Activated naive CD8-positive, alpha-beta T cell treated with anti-CD3 and anti-CD28 coated beads, Interleukin-2, amount 10 ng/mL, durations not matched to agents 7 days and 5 days (primary cell): ENCODE measurements at regions of chr1 and their contacts with region 1.

Region 1: DNA sequence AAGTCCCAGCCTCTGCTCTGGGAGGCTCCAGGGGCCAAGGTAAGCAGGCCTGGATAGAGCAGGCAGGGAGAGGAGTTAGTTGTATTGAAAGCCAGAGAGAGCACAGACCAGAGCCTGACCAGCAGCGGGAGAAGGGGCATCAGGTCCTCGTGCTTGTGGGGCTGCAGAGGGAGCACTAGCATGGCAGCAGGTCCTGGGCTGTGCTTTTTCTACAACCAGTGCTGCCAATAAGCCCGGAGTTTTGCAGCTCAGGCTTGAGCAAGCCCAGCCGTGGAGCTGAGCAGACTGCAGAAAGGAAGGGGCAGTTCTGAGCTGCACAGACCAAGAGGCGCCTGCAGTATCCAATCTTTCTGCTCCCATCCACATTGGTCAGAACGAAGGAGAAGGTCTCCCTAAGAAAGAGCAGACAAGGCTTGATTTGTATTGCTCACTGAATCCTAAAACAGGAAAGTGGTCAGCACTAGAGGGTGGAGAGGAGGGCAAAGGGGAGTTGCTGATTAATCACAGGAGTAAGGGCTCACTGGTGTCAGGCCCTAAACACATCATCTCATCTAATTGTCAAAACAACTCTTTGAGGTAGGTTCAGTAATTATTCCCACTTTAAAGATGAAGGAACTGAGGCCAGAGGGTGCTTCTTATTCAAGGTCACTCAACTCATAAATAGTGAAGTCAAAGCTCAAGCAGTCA is 2.7 kb downstream of the DENND2D start:
- DNase-seq: peak; percentile 65
- ATAC-seq: peak; percentile 35
- H3K4me3 Mint-ChIP-seq: peak overlapping the region; percentile 98
- H3K27ac Mint-ChIP-seq: peak overlapping the region; percentile 97
- H3K4me1 Mint-ChIP-seq: peaks cover 53% of the 10 kb centered on the region
- H3K27me3 Mint-ChIP-seq: no peaks in the 10 kb centered on the region

Region 2: GRCh38 chr1:111139956-111140679 is 57.6 kb before region 1 on chr1 and contains the starts of genes CEPT1 and DRAM2:
- POLR2A ChIA-PET with region 1: interaction called, 22 read pairs
- DNase-seq: peak; percentile 90
- ATAC-seq: peak; percentile 73
- H3K4me3 Mint-ChIP-seq: peak within 1 kb of the TSS; percentile 100
- H3K27ac Mint-ChIP-seq: peak within 1 kb of the TSS; percentile 99
- H3K4me1 Mint-ChIP-seq: peaks cover 35% of the 10 kb centered on the region
- H3K27me3 Mint-ChIP-seq: no peaks in the 10 kb centered on the region
- total RNA-seq, gene CEPT1: 44.1 to 46.5 TPM
- total RNA-seq, gene DRAM2: 36.7 to 37.1 TPM

Region 3: DNA sequence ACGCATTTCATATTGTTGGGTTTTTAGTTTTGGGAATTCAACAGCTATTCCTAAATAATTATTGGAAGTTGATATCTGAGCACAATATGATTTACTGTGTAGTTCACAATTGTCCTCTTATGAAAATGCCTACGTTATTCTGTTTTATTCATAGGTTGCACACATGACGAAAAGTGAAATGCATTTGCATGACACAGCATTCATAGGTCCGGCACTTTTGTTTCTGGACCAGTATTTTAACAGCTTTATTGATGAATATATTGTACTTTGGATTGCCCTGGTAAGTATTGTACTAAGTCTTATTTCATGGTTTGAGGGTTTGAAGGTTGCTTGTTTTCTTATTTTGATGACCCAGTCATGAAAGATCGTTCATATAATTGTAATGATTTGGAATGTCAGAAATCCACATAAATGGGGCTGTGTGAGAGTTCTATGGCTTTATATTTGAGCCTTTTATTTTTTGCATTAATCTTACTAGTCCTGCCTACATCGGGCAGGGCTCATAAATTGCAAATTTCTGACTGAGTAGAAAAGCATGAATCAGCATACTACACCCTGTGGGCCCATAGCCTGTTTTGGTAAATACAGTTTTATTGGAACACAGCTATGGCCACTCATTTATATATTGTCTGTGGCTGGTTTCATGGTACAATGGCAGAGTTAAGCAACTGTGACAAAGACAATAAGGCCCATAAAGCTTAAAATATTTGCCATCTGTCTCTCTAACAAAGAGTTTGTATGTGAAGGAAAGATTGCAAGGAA is 14.3 kb before region 1 on chr1:
- POLR2A ChIA-PET with region 1: interaction called, 41 read pairs
- DNase-seq: no peak
- ATAC-seq: no peak
- H3K4me3 Mint-ChIP-seq: no peak overlapping the region
- H3K27ac Mint-ChIP-seq: no peak overlapping the region
- H3K4me1 Mint-ChIP-seq: peaks cover 28% of the 10 kb centered on the region
- H3K27me3 Mint-ChIP-seq: no peaks in the 10 kb centered on the region

Region 4: DNA sequence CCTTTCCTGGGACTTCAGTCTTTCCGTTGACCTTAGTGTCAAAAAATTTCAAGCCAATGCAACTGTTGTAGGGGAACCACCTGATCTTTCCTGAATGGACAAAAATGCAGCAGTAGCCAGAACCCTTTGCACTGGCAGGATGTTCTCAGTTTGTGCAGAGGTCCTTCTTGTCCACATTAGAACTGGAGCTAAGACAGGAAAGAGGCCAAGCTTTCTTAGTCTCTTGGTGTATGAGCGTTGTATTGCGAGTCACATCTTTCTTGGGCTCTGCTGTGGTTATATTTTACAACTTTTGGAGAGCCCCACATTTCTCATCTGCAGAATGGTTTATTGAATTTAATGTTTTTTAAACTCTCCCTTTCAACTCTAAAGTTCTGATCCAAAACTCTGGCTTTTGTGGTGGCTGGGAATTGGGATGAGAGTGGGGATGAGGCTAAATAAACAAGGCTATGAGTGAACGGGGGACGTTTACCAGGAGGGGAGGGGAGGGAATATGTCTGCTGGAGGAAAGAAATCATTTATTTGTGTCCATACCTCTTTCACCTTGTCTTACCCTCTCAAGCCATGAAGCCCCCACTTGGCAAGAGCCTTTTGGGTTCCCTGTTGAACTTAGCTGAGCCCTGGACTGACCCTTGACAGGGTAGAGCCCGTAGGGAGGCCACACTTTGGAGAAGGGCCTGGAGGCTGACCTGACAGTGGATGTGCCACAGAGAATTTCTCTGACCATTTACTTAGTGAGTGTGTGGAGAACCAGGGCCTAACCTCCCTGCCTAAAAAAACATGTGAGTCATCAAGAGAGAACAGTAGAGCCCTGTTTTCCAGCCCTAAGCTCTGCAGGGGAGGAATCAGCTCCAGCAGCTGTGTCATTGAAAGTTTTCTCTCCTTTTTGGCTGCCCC is 30.4 kb after region 1 on chr1:
- POLR2A ChIA-PET with region 1: interaction called, 948 read pairs
- DNase-seq: no peak
- ATAC-seq: peak; percentile 24
- H3K4me3 Mint-ChIP-seq: peak overlapping the region; percentile 37
- H3K27ac Mint-ChIP-seq: peak overlapping the region; percentile 69
- H3K4me1 Mint-ChIP-seq: peaks cover 62% of the 10 kb centered on the region
- H3K27me3 Mint-ChIP-seq: no peaks in the 10 kb centered on the region

Region 5: DNA sequence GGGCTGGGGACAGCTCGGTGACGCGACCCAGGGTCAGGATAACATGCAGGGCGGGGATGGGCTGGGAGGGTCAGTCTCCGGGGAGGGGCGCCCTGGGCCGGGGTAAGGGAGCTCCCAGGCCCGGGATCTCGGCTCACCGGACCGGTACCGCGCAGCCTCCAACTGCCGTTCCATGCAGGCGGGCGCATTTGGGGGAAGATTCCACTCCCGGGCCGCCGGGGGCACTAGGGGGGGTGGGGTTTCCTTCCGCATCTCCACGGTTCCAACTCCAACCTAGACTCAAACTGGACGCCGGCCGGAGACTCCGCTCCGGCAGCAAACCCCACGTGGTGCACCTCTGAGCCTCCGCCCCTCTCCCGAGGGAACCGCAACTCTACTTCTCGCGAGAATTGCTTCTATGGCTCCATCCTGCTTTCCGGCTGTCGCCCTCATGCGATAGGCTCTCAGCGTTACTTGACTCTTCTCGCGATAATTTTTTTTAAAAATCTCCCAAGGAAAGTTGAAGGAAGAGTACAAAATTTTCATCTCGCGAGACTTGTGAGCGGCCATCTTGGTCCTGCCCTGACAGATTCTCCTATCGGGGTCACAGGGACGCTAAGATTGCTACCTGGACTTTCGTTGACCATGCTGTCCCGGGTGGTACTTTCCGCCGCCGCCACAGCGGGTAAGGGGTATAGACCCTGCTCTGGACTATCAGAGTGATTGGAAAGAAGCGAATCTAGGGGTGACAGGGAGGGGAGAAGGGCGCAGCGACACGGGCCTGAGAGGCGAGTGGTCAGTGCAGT is 251.4 kb after region 1 on chr1 and contains the starts of genes ATP5PB and WDR77:
- POLR2A ChIA-PET with region 1: interaction called, 14 read pairs
- DNase-seq: peak; percentile 83
- ATAC-seq: peak; percentile 94
- H3K4me3 Mint-ChIP-seq: peak within 1 kb of the TSS; percentile 99
- H3K27ac Mint-ChIP-seq: peak within 1 kb of the TSS; percentile 94
- H3K4me1 Mint-ChIP-seq: peaks cover 61% of the 10 kb centered on the region
- H3K27me3 Mint-ChIP-seq: no peaks in the 10 kb centered on the region
- total RNA-seq, gene ATP5PB: 259 to 260 TPM
- total RNA-seq, gene WDR77: 35.7 to 35.9 TPM